CD8-positive, alpha-beta memory T cell (primary cell): ENCODE measurements at regions of chr10 and their contacts with region 1.

Region 1: GRCh38 chr10:101141616-101142532 is 10.8 kb downstream of the TLX1 start:
- DNase-seq: peak; percentile 65 to 81 (median 70)
- H3K4me3 ChIP-seq: no peak overlapping the region
- H3K4me3 Mint-ChIP-seq: peak overlapping the region in 2 of 7 donors; percentile 7 to 28
- H3K27ac ChIP-seq: no peak overlapping the region
- H3K27ac Mint-ChIP-seq: peak overlapping the region in 2 of 8 donors; percentile 28 to 44
- H3K4me1 ChIP-seq: peaks cover 9% of the 10 kb centered on the region
- H3K4me1 Mint-ChIP-seq: peaks cover 24 to 49% (median 25%) of the 10 kb centered on the region in 3 donors
- H3K27me3 ChIP-seq: peaks cover 71% of the 10 kb centered on the region
- H3K27me3 Mint-ChIP-seq: peaks cover 73 to 85% of the 10 kb centered on the region in 2 donors

Region 2: DNA sequence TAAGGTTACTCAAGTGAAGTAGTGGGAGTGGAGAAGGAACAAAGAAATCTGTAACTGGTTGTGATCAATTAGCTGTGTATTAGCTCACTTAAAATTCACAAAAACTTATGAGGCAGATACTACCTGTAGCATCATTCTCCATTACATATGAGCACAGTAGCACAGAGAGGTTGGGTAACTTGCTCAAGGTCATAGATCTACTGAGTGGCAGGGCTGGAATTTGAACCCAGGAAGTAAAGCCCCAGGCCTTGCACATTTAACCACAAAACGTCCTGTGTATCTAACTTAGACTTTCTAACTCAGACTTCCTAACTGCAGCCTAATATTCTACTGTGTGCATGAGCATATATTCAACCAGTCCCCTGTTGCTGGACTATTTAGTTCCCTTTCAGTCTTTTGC is 234.7 kb before region 1 on chr10:
- CTCF ChIA-PET with region 1: no interaction called
- POLR2A ChIA-PET with region 1: no interaction called
- DNase-seq: no peak
- H3K4me3 ChIP-seq: no peak overlapping the region
- H3K4me3 Mint-ChIP-seq: no peak overlapping the region
- H3K27ac ChIP-seq: no peak overlapping the region
- H3K27ac Mint-ChIP-seq: no peak overlapping the region
- H3K4me1 ChIP-seq: peaks cover 4% of the 10 kb centered on the region
- H3K4me1 Mint-ChIP-seq: peaks cover 8 to 18% (median 13%) of the 10 kb centered on the region in 3 donors
- H3K27me3 ChIP-seq: no peaks in the 10 kb centered on the region
- H3K27me3 Mint-ChIP-seq: peaks cover 3 to 12% of the 10 kb centered on the region in 2 donors

Region 3: GRCh38 chr10:101042667-101043355 is 99.1 kb before region 1 on chr10:
- CTCF ChIA-PET with region 1: interaction called, 19 read pairs
- POLR2A ChIA-PET with region 1: no interaction called
- DNase-seq: peak; percentile 65 to 87 (median 67)
- H3K4me3 ChIP-seq: peak overlapping the region; percentile 67
- H3K4me3 Mint-ChIP-seq: peak overlapping the region; percentile 92 to 99 (median 97)
- H3K27ac ChIP-seq: peak overlapping the region; percentile 66
- H3K27ac Mint-ChIP-seq: peak overlapping the region; percentile 74 to 100 (median 96)
- H3K4me1 ChIP-seq: peaks cover 17% of the 10 kb centered on the region
- H3K4me1 Mint-ChIP-seq: peaks cover 20 to 27% (median 21%) of the 10 kb centered on the region in 3 donors
- H3K27me3 ChIP-seq: no peaks in the 10 kb centered on the region
- H3K27me3 Mint-ChIP-seq: peaks cover 8 to 18% of the 10 kb centered on the region in 2 donors

Region 4: DNA sequence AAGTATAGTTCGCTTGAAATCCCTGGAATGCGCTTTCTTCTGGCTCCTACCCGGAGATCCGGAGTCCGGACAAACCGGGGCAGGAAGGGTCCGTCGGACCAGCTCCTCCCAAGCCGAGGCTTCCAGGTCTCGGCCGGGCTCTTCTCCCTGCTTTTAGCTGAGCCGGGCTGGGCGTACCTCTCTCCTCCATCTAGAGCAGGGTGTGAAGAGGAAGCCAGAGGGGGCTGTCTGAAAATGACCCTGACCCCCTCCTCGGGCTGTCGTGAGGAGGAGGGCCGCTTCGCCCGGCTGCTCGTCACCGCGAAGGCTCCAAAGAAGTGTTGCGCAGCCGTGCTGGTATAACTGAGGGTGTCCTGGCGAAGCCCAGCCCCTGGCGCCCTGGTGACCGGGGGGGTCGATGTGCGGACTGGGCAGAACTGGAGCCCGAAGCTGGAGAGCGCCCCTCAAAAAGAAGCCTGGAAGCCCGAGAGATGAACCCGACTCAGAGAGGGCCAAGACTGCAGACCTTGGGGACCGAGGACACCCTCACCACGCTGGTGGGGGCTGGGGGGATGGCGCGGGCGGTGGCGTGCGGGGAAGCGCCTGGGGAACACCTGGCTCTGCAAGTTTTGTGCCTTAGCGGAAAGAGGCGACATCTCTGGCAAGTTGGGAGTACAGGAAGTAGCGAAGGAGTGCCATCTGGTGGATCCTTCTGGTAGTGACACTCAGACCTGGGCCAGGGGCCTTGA is 74.4 kb before region 1 on chr10:
- CTCF ChIA-PET with region 1: interaction called, 19 read pairs
- POLR2A ChIA-PET with region 1: no interaction called
- DNase-seq: peak; percentile 63 to 80 (median 69)
- H3K4me3 ChIP-seq: peak overlapping the region; percentile 65
- H3K4me3 Mint-ChIP-seq: peak overlapping the region; percentile 90 to 97 (median 92)
- H3K27ac ChIP-seq: peak overlapping the region; percentile 43
- H3K27ac Mint-ChIP-seq: peak overlapping the region in 3 of 8 donors; percentile 28 to 86 (median 42)
- H3K4me1 ChIP-seq: peaks cover 28% of the 10 kb centered on the region
- H3K4me1 Mint-ChIP-seq: peaks cover 10 to 35% (median 15%) of the 10 kb centered on the region in 3 donors
- H3K27me3 ChIP-seq: peaks cover 46% of the 10 kb centered on the region
- H3K27me3 Mint-ChIP-seq: peaks cover 37 to 52% of the 10 kb centered on the region in 2 donors

Region 5: GRCh38 chr10:101095542-101096213 is 46.2 kb before region 1 on chr10:
- CTCF ChIA-PET with region 1: interaction called, 287 read pairs
- POLR2A ChIA-PET with region 1: interaction called, 10 read pairs
- DNase-seq: peak; percentile 46 to 69 (median 52)
- H3K4me3 ChIP-seq: no peak overlapping the region
- H3K4me3 Mint-ChIP-seq: no peak overlapping the region
- H3K27ac ChIP-seq: no peak overlapping the region
- H3K27ac Mint-ChIP-seq: no peak overlapping the region
- H3K4me1 ChIP-seq: no peaks in the 10 kb centered on the region
- H3K4me1 Mint-ChIP-seq: no peaks in the 10 kb centered on the region
- H3K27me3 ChIP-seq: no peaks in the 10 kb centered on the region
- H3K27me3 Mint-ChIP-seq: peaks cover 38 to 75% of the 10 kb centered on the region in 2 donors

Region 6: GRCh38 chr10:101120884-101121653 is 20.8 kb before region 1 on chr10:
- CTCF ChIA-PET with region 1: interaction called, 22 read pairs
- POLR2A ChIA-PET with region 1: no interaction called
- DNase-seq: peak in 2 of 5 donors; percentile 38 to 60
- H3K4me3 ChIP-seq: peak overlapping the region; percentile 70
- H3K4me3 Mint-ChIP-seq: peak overlapping the region; percentile 88 to 98 (median 95)
- H3K27ac ChIP-seq: no peak overlapping the region
- H3K27ac Mint-ChIP-seq: peak overlapping the region in 6 of 8 donors; percentile 56 to 92 (median 86)
- H3K4me1 ChIP-seq: peaks cover 22% of the 10 kb centered on the region
- H3K4me1 Mint-ChIP-seq: peaks cover 29 to 34% (median 32%) of the 10 kb centered on the region in 3 donors
- H3K27me3 ChIP-seq: peaks cover 38% of the 10 kb centered on the region
- H3K27me3 Mint-ChIP-seq: peaks cover 60% of the 10 kb centered on the region in 2 donors

Region 7: GRCh38 chr10:101155896-101156295 is 14.0 kb after region 1 on chr10:
- CTCF ChIA-PET with region 1: interaction called, 24 read pairs
- POLR2A ChIA-PET with region 1: no interaction called
- DNase-seq: no peak
- H3K4me3 ChIP-seq: no peak overlapping the region
- H3K4me3 Mint-ChIP-seq: no peak overlapping the region
- H3K27ac ChIP-seq: no peak overlapping the region
- H3K27ac Mint-ChIP-seq: no peak overlapping the region
- H3K4me1 ChIP-seq: no peaks in the 10 kb centered on the region
- H3K4me1 Mint-ChIP-seq: no peaks in the 10 kb centered on the region
- H3K27me3 ChIP-seq: peaks cover 14% of the 10 kb centered on the region
- H3K27me3 Mint-ChIP-seq: peaks cover 27 to 81% of the 10 kb centered on the region in 2 donors